ENCODE measurements at regions of chr15 and their contacts with region 1.

Region 1: DNA sequence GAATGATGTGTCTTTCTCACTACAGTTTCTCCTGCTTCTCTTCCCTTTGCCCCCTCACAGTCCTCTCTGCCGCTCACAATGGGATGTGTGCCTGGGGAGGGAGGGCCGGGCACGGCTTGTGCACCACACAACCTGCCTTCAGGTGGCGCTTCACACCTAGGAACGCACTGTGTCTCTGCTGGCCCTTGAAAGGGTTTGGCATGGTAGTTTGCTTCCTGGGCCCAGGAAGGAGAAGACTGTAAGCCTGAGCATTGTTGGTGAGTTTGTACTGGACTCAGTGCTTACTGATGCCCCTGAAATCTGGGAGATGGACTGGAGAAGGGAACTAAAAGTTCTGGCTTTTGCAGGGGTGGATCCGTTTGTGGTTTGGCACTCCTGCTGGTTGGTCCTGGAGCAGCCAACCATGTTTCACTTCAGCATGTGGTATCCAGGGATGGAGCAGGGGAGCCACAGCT is 9.2 kb downstream of the ALPK3 start:
- DNase-seq: peak; percentile 46 to 76
- H3K4me3 ChIP-seq: no peak overlapping the region
- H3K27ac ChIP-seq: peak overlapping the region in 1 of 5 donors; percentile 93
- H3K4me1 ChIP-seq: peaks cover 4 to 68% (median 39%) of the 10 kb centered on the region in 4 donors
- H3K27me3 ChIP-seq: no peaks in the 10 kb centered on the region
- CTCF ChIP-seq: peak in 5 of 7 experiments; percentile 16 to 75 (median 48)
- EP300 ChIP-seq: no peak
- POLR2A ChIP-seq: no peak

Region 2: DNA sequence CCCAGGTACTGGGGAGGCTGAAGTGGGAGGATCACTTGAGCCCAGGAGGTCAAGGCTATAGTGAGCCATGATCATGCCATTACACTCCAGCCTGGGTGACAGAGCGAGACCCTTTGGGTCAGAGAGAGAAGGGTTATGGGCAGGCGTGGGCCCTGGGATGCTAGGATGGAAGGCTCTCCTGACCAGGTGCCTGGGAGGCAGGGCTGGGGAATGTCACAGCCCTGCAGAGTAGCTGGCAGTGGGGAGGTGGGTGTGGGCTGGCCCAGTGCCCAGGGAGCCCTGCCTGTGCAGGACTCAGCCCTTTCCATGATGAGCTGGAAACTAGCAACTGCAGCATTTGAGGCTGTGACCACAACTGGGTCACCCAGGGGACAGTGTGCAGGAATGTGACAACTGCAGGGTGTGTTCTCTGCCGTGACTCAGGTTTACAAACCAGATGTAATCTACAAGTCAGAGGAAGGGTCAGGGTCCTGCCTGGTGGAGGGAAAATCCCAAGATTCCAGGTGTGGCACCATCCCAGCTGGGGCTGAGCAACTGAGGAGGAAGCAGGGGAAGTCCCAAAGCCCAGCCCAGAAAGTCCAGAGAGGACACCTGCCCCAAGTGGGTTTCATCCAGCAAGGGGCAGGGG is 103.5 kb after region 1 on chr15:
- intact Hi-C with region 1: loop called (anchors 10 kb)
- DNase-seq: peak; percentile 86 to 95
- H3K4me3 ChIP-seq: no peak overlapping the region
- H3K27ac ChIP-seq: peak overlapping the region in 3 of 5 donors; percentile 12 to 32 (median 19)
- H3K4me1 ChIP-seq: peaks cover 3 to 30% (median 10%) of the 10 kb centered on the region in 4 donors
- H3K27me3 ChIP-seq: no peaks in the 10 kb centered on the region
- CTCF ChIP-seq: no peak
- EP300 ChIP-seq: no peak
- POLR2A ChIP-seq: no peak